ENCODE measurements at regions of chr1 and their contacts with region 1.

Region 1: GRCh38 chr1:2580691-2581090 is 5.9 kb upstream of the PRXL2B start:
- DNase-seq: no peak
- H3K4me3 ChIP-seq: no peak overlapping the region
- H3K27ac ChIP-seq: peak overlapping the region; percentile 86
- H3K4me1 ChIP-seq: peaks cover 34% of the 10 kb centered on the region
- H3K27me3 ChIP-seq: no peaks in the 10 kb centered on the region
- CTCF ChIP-seq: no peak
- POLR2A ChIP-seq: no peak

Region 2: DNA sequence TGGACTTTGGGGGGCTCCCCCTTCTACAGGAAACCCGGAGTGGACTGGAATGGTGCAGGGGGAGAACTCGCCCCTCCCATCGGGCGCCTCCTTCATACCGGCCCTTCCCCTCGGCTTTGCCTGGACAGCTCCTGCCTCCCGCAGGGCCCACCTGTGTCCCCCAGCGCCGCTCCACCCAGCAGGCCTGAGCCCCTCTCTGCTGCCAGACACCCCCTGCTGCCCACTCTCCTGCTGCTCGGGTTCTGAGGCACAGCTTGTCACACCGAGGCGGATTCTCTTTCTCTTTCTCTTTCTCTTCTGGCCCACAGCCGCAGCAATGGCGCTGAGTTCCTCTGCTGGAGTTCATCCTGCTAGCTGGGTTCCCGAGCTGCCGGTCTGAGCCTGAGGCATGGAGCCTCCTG is 24.4 kb before region 1 on chr1 and contains the start of gene TNFRSF14:
- CTCF ChIA-PET with region 1: interaction called, 23 read pairs
- POLR2A ChIA-PET with region 1: interaction called, 3 read pairs
- dilution Hi-C with region 1: no loop called
- intact Hi-C with region 1: loop called (anchors 1 kb)
- DNase-seq: peak; percentile 65
- H3K4me3 ChIP-seq: peak within 1 kb of the TSS; percentile 15 to 38 (median 28)
- H3K27ac ChIP-seq: peak within 1 kb of the TSS; percentile 53
- H3K4me1 ChIP-seq: peaks cover 23% of the 10 kb centered on the region
- H3K27me3 ChIP-seq: no peaks in the 10 kb centered on the region
- CTCF ChIP-seq: peak in 1 of 2 donors; percentile 17
- POLR2A ChIP-seq: no peak
- total RNA-seq, gene TNFRSF14: 36.4 and 40.9 TPM in 2 replicates

Region 3: GRCh38 chr1:2561898-2562545 is 18.7 kb before region 1 on chr1:
- CTCF ChIA-PET with region 1: interaction called, 14 read pairs
- POLR2A ChIA-PET with region 1: no interaction called
- dilution Hi-C with region 1: no loop called
- intact Hi-C with region 1: loop called (anchors 2 kb)
- DNase-seq: no peak
- H3K4me3 ChIP-seq: no peak overlapping the region
- H3K27ac ChIP-seq: no peak overlapping the region
- H3K4me1 ChIP-seq: no peaks in the 10 kb centered on the region
- H3K27me3 ChIP-seq: no peaks in the 10 kb centered on the region
- CTCF ChIP-seq: peak; percentile 20 to 23
- POLR2A ChIP-seq: no peak

Measured in endothelial cell of umbilical vein (primary cell).